HCT116 (cell line): ENCODE measurements at regions of chr11 and their contacts with region 1.

Region 1: DNA sequence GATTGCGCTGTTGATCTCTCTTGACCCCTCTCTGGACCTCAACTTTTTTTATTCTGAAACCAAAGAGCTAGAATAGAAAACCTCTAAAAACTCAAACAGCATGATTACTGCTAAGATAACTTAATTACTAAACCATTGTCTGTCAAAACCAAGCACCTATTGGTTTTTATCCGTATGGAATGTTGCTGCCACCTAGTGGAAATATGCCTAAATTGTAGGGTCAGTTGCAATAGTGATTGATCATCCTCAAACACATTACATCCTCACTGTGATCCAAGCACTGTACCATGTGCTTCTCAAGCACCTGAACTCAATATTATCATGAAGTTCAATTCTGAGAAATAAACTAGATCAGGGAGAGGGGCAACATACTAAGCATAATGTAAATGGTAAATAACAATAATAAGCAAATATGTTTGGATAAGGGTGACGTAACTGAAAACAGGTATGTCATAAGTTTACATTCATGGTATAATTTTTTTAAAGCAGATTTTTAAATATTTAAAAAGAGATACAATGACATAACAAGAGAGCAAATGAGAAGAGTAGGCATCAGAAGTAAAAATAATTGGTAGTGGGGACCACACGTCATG is 3.8 kb upstream of the OR5A2 start:
- DNase-seq: peak; percentile 56
- ATAC-seq: peak; percentile 85
- H3K4me3 ChIP-seq: no peak overlapping the region
- H3K27ac ChIP-seq: no peak overlapping the region
- H3K4me1 ChIP-seq: no peaks in the 10 kb centered on the region
- H3K27me3 ChIP-seq: no peaks in the 10 kb centered on the region
- CTCF ChIP-seq: peak; percentile 65 to 91 (median 76); a peak in 5 of 6 replicates
- POLR2A ChIP-seq: no peak
- RAD21 ChIP-seq: peak; percentile 80

Region 2: DNA sequence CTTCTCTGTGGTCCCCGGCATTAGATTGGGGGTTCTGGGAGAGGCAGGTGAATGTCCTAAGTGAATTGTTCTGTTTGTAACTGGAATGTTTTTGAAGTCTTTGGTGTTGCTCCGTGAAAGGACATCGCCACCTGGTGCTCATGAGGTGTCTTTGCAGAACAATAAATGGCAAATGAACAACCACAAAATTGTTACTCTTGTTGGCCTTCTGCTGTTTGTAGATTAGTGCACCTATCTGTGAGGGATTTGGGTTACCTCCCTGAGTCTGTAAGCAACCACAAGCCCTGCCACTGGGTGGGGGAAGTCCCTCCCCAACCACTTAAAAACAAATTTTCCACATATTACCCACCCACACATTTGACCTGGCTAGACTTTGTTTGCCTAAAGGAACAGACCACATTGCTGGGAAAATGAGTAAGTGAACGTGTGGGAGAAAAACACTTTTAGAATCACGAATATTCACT is 222.0 kb before region 1 on chr11:
- CTCF ChIA-PET with region 1: interaction called, 4 read pairs
- POLR2A ChIA-PET with region 1: no interaction called
- RAD21 ChIA-PET with region 1: no interaction called
- intact Hi-C with region 1: loop called (anchors 2 kb)
- DNase-seq: no peak
- ATAC-seq: peak; percentile 58
- H3K4me3 ChIP-seq: no peak overlapping the region
- H3K27ac ChIP-seq: no peak overlapping the region
- H3K4me1 ChIP-seq: no peaks in the 10 kb centered on the region; a peak in 2 of 4 replicates
- H3K27me3 ChIP-seq: no peaks in the 10 kb centered on the region
- CTCF ChIP-seq: peak; percentile 61 to 78 (median 70)
- POLR2A ChIP-seq: no peak
- RAD21 ChIP-seq: peak; percentile 72

Region 3: DNA sequence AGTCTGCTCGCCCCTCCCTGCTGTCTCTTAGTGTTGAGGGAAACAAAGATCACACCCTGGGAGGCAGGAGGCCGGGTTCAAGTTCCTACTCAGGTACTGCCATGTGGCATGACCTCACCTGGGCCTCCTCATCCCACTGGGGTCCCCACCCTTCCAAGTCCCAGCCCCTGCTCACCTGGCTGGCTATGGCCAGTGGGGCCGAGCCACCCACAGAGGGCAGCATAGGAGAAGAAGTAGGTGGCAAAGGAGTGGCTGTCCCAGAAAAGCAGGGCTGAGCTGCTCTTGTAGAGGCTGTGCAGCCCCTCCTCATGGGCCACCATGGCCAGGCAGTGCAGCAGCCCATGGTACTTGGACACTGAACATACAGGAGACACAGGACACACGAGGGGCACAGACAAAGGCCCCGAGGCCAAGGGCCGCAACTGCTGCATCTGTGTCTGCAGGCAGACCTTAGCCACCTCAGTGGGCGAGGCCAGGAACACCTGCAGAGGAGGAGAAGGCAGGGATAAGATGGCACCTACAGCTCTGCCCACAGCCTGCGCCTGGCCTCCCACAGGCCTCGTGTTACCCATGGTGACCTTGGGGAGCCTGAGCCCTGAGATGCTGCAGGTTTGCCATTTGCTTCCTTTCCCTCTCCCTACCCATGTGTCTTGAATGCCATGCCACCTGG is 166.7 kb before region 1 on chr11:
- CTCF ChIA-PET with region 1: interaction called, 3 read pairs
- POLR2A ChIA-PET with region 1: no interaction called
- RAD21 ChIA-PET with region 1: no interaction called
- intact Hi-C with region 1: loop called (anchors 1 kb)
- DNase-seq: peak; percentile 7
- ATAC-seq: peak; percentile 84
- H3K4me3 ChIP-seq: no peak overlapping the region
- H3K27ac ChIP-seq: no peak overlapping the region
- H3K4me1 ChIP-seq: peaks cover 7 to 8% of the 10 kb centered on the region in 2 experiments
- H3K27me3 ChIP-seq: no peaks in the 10 kb centered on the region
- CTCF ChIP-seq: peak; percentile 32 to 57 (median 52); a peak in 5 of 6 replicates
- POLR2A ChIP-seq: no peak
- RAD21 ChIP-seq: peak; percentile 72

Region 4: GRCh38 chr11:59802639-59803176 is 372.7 kb after region 1 on chr11:
- CTCF ChIA-PET with region 1: no interaction called
- POLR2A ChIA-PET with region 1: no interaction called
- RAD21 ChIA-PET with region 1: no interaction called
- intact Hi-C with region 1: loop called (anchors 10 kb)
- DNase-seq: peak; percentile 46
- ATAC-seq: peak; percentile 67
- H3K4me3 ChIP-seq: no peak overlapping the region
- H3K27ac ChIP-seq: no peak overlapping the region
- H3K4me1 ChIP-seq: peaks cover 0 to 7% of the 10 kb centered on the region in 2 experiments; a peak in 1 of 4 replicates
- H3K27me3 ChIP-seq: no peaks in the 10 kb centered on the region
- CTCF ChIP-seq: peak; percentile 41 to 95 (median 66); a peak in 5 of 6 replicates
- POLR2A ChIP-seq: no peak
- RAD21 ChIP-seq: peak; percentile 94